ENCODE measurements at regions of chr2 and their contacts with region 1.

Region 1: DNA sequence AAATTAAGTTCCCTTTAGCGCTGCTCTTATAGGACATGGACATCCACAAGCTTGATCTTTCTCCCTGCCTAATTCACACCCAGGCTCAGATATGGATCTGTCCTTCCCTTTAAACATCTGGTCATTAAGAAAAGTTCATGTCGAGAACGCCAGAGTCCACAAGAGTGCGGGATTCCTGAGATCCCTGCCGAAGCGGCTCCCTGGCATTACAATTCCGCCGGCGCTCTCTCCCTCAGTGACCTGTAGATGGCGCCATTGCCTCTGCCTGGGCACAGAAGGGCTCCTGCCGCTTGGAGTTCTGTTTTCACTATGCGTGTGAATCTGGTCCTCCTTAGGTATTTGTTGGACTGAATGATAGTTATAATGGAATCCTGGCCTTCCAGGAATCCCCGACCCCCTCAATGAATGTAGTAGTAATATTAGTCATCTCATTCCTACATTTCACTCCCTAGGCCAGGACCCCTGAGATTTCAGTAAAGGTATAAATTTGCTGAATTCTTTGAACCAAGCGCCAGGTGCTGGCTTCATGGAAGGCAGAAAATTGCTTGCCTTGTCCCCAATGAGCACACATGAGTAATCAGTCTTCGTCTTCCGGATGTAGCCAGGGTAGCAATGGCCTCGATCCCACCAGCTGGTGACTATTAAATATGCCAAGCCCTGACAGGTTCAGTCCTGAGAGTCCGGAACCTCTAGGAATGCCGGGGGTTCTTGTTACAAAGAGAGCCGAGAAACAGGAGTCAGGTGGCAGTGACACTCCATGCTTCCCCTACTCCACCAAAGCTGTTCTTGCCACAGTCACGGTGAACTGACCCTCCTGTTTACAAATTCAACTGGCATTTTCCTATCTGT is 26.4 kb upstream of the CD207 start:
- DNase-seq: peak; percentile 75 to 80
- H3K4me3 ChIP-seq: no peak overlapping the region
- H3K27ac ChIP-seq: no peak overlapping the region
- H3K4me1 ChIP-seq: peaks cover 0 to 3% (median 0%) of the 10 kb centered on the region in 4 donors
- H3K27me3 ChIP-seq: peaks cover 0 to 36% of the 10 kb centered on the region in 2 donors
- CTCF ChIP-seq: peak; percentile 70 to 97

Region 2: GRCh38 chr2:70873541-70873940 is 11.5 kb after region 1 on chr2:
- intact Hi-C with region 1: no loop called
- DNase-seq: no peak
- H3K4me3 ChIP-seq: no peak overlapping the region
- H3K27ac ChIP-seq: no peak overlapping the region
- H3K4me1 ChIP-seq: peaks cover 0 to 11% (median 8%) of the 10 kb centered on the region in 4 donors
- H3K27me3 ChIP-seq: peaks cover 0 to 69% of the 10 kb centered on the region in 2 donors
- CTCF ChIP-seq: no peak

Region 3: DNA sequence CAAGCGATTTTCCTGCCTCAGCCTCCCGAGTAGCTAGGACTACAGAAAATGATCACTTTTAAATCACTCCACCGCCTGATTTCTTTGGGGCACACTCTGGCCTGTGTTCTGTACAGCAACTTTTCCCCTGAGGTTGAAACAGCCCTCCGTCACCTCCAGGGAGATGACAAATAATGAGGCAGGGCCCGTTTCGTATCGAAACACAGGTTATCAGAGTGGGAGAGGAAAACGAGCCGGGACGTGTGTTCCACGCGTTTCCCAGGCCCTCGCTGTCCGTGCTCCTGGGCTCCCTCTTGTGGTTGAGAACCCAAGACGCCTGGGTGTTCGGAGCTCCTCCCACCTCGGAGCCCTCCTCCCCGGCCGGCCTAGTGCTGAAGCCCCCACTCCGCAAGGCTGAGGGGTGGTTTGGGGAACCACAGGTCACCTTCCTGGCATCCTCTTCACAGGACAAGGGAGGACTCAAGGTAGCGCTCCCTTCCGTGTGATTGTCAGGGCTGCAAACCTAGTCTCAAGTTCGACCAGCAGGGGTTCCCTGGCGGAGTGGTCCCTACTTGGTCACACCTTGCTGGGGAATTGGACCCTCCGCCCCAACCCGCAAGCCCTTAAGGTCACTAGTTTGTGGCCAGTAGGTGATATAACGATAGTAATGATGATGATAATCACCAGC is 86.5 kb after region 1 on chr2:
- intact Hi-C with region 1: loop called (anchors 5 kb)
- DNase-seq: peak; percentile 76 to 82
- H3K4me3 ChIP-seq: peak overlapping the region; percentile 31 to 41
- H3K27ac ChIP-seq: no peak overlapping the region
- H3K4me1 ChIP-seq: peaks cover 0 to 14% (median 6%) of the 10 kb centered on the region in 4 donors
- H3K27me3 ChIP-seq: peaks cover 0 to 11% of the 10 kb centered on the region in 2 donors
- CTCF ChIP-seq: peak; percentile 79 to 85